ENCODE measurements at regions of chr7 and their contacts with region 1.

Region 1: GRCh38 chr7:141654551-141654950 is 47.4 kb downstream of the DENND11 start:
- DNase-seq: peak; percentile 84
- H3K4me3 Mint-ChIP-seq: no peak overlapping the region
- H3K27ac Mint-ChIP-seq: peak overlapping the region; percentile 68
- H3K4me1 Mint-ChIP-seq: peaks cover 6% of the 10 kb centered on the region
- H3K27me3 Mint-ChIP-seq: no peaks in the 10 kb centered on the region

Region 2: GRCh38 chr7:141072548-141073172 is 581.9 kb before region 1 on chr7:
- CTCF ChIA-PET with region 1: no interaction called
- intact Hi-C with region 1: loop called (anchors 2 kb)
- DNase-seq: peak; percentile 54
- H3K4me3 Mint-ChIP-seq: peak overlapping the region; percentile 64
- H3K27ac Mint-ChIP-seq: no peak overlapping the region
- H3K4me1 Mint-ChIP-seq: peaks cover 15% of the 10 kb centered on the region
- H3K27me3 Mint-ChIP-seq: peaks cover 53% of the 10 kb centered on the region

Region 3: DNA sequence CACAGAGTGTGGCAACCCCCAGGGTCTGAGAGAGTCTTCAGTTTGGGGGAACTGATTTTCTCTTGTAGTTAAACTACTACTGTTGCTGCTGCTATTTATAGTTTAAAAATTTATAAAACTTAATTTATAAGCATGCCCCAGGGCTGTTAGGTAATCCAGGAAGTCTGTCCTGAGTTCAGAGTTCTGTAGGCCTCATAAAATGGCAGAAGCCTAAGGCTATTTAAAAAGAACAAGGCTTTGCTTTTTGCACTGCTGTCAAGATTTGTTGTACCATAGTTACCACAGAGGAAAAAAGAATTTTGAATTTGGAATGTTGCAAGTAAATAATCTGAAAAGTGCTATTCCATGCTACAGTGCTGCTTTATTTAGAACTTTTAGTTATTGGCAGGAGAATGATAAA is 37.3 kb before region 1 on chr7:
- CTCF ChIA-PET with region 1: no interaction called
- intact Hi-C with region 1: no loop called
- DNase-seq: no peak
- H3K4me3 Mint-ChIP-seq: no peak overlapping the region
- H3K27ac Mint-ChIP-seq: no peak overlapping the region
- H3K4me1 Mint-ChIP-seq: no peaks in the 10 kb centered on the region
- H3K27me3 Mint-ChIP-seq: no peaks in the 10 kb centered on the region

Region 4: GRCh38 chr7:141674702-141675101 is 20.2 kb after region 1 on chr7:
- CTCF ChIA-PET with region 1: interaction called, 5 read pairs
- intact Hi-C with region 1: loop called (anchors 1 kb)
- DNase-seq: peak; percentile 15
- H3K4me3 Mint-ChIP-seq: no peak overlapping the region
- H3K27ac Mint-ChIP-seq: no peak overlapping the region
- H3K4me1 Mint-ChIP-seq: peaks cover 17% of the 10 kb centered on the region
- H3K27me3 Mint-ChIP-seq: no peaks in the 10 kb centered on the region

Region 5: DNA sequence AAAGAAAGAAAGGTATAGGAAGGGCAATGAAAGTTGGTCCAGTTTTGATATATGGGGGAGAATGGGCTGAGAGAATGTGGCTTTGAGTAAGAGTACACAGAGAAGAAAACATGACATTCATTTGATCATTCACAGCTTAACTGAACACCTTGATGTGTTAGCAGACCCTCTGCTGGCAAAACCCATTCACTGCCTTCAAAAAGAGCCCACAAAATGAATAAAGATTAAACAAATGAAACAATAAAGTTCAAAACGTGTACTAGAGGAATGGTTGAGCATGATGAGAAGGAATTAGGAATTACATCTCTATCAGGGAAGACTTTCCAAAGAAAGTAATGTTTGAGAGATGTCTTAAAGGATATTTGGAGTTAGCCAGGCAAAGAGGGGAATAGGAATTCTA is 55.8 kb after region 1 on chr7:
- CTCF ChIA-PET with region 1: interaction called, 8 read pairs
- intact Hi-C with region 1: loop called (anchors 1 kb)
- DNase-seq: no peak
- H3K4me3 Mint-ChIP-seq: no peak overlapping the region
- H3K27ac Mint-ChIP-seq: no peak overlapping the region
- H3K4me1 Mint-ChIP-seq: peaks cover 4% of the 10 kb centered on the region
- H3K27me3 Mint-ChIP-seq: no peaks in the 10 kb centered on the region

Region 6: DNA sequence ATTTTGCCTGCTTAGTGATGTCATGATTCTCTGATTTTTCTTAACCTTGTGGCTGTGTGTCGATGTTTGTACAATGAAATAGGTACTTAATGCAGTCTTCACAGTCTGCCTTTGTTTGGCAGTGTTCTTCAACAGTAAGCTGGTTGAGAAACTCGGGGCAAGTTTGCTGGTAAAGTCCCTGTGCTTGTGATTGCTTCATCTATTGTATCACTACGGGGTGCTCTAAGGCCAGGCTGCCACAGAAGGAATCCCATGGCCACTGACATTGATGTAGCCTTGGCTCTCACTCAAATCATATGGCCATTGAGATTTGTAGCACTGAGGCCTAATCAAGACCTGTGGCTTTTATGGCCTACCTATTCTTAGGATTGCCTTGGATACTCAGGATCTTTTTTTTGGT is 220.2 kb after region 1 on chr7:
- CTCF ChIA-PET with region 1: no interaction called
- intact Hi-C with region 1: no loop called
- DNase-seq: no peak
- H3K4me3 Mint-ChIP-seq: no peak overlapping the region
- H3K27ac Mint-ChIP-seq: no peak overlapping the region
- H3K4me1 Mint-ChIP-seq: no peaks in the 10 kb centered on the region
- H3K27me3 Mint-ChIP-seq: peaks cover 2% of the 10 kb centered on the region

Region 7: GRCh38 chr7:141975806-141976523 is 321.4 kb after region 1 on chr7:
- CTCF ChIA-PET with region 1: interaction called, 3 read pairs
- intact Hi-C with region 1: loop called (anchors 5 kb)
- DNase-seq: peak; percentile 88
- H3K4me3 Mint-ChIP-seq: peak overlapping the region; percentile 76
- H3K27ac Mint-ChIP-seq: peak overlapping the region; percentile 28
- H3K4me1 Mint-ChIP-seq: peaks cover 18% of the 10 kb centered on the region
- H3K27me3 Mint-ChIP-seq: no peaks in the 10 kb centered on the region

Region 8: GRCh38 chr7:142177869-142178268 is 523.3 kb after region 1 on chr7:
- CTCF ChIA-PET with region 1: no interaction called
- intact Hi-C with region 1: no loop called
- DNase-seq: no peak
- H3K4me3 Mint-ChIP-seq: no peak overlapping the region
- H3K27ac Mint-ChIP-seq: no peak overlapping the region
- H3K4me1 Mint-ChIP-seq: no peaks in the 10 kb centered on the region
- H3K27me3 Mint-ChIP-seq: no peaks in the 10 kb centered on the region

Region 9: DNA sequence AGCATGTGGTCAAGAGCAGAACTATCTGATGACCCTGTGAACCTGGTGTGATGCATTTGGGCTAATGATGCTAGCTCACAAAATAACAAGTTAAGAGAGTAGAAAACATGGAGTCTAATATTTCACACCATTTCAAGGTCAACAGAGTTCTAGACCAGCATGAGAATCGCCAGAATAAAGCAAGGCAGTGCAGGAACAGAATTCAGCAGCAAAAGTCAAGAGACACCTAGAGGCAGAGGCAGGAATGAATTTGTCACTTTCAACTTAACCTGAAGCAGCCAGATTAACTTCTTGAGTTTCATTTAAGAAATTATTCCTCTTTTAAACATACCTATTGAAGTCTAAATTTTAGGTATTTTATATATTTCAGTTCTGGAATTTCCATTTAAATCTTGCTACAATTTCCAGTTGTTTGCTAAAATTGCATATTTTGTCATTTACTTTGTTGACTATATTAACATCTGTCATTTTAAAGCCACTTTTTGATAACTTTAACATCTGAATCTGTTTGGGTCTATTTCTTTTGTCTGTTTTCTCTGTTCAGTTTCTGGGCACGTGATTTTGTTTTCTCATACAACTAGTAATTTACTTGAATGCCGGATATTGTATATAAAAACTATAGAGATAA is 647.5 kb after region 1 on chr7:
- CTCF ChIA-PET with region 1: no interaction called
- intact Hi-C with region 1: loop called (anchors 10 kb)
- DNase-seq: no peak
- H3K4me3 Mint-ChIP-seq: no peak overlapping the region
- H3K27ac Mint-ChIP-seq: no peak overlapping the region
- H3K4me1 Mint-ChIP-seq: peaks cover 30% of the 10 kb centered on the region
- H3K27me3 Mint-ChIP-seq: peaks cover 11% of the 10 kb centered on the region

Measured in activated naive CD4-positive, alpha-beta T cell treated with anti-CD3 and anti-CD28 coated beads for 36 hours (primary cell).